ENCODE measurements at regions of chr13 and their contacts with region 1.

Region 1: GRCh38 chr13:23871616-23872220 is 17.5 kb downstream of the MIPEP start:
- DNase-seq: peak in 3 of 14 experiments; percentile 13 to 27 (median 18)
- ATAC-seq: no peak
- H3K4me3 ChIP-seq: no peak overlapping the region
- H3K4me3 Mint-ChIP-seq: no peak overlapping the region
- H3K27ac ChIP-seq: no peak overlapping the region
- H3K27ac Mint-ChIP-seq: no peak overlapping the region
- H3K4me1 ChIP-seq: no peaks in the 10 kb centered on the region
- H3K4me1 Mint-ChIP-seq: no peaks in the 10 kb centered on the region
- H3K27me3 ChIP-seq: no peaks in the 10 kb centered on the region
- H3K27me3 Mint-ChIP-seq: no peaks in the 10 kb centered on the region
- CTCF ChIP-seq: peak; percentile 80

Region 2: GRCh38 chr13:22091222-22091970 is 1780.3 kb before region 1 on chr13:
- CTCF ChIA-PET with region 1: no interaction called
- POLR2A ChIA-PET with region 1: no interaction called
- intact Hi-C with region 1: no loop called
- DNase-seq: no peak
- ATAC-seq: no peak
- H3K4me3 ChIP-seq: no peak overlapping the region
- H3K4me3 Mint-ChIP-seq: no peak overlapping the region
- H3K27ac ChIP-seq: no peak overlapping the region
- H3K27ac Mint-ChIP-seq: no peak overlapping the region
- H3K4me1 ChIP-seq: no peaks in the 10 kb centered on the region
- H3K4me1 Mint-ChIP-seq: no peaks in the 10 kb centered on the region
- H3K27me3 ChIP-seq: no peaks in the 10 kb centered on the region
- H3K27me3 Mint-ChIP-seq: peaks cover 4% of the 10 kb centered on the region
- CTCF ChIP-seq: no peak

Region 3: DNA sequence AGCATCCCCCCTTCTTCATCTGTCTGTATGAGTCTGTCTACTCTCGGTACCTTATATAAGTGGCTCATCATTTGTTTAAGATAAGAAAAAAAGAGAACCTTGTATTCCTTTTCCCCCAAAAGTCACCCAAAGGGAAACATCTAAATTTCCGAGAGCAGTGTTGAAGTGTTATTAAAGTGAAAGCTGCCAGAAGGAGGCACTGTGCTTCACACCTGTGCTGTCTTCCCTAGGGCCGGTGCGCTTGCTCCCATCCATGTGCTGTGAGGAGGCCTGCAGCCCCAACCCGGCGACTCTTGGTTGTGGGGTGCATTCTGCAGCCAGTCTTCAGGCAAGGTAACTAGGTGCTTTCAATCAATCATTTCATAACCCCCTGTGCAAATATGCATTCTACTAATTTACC is 204.0 kb before region 1 on chr13:
- CTCF ChIA-PET with region 1: no interaction called
- POLR2A ChIA-PET with region 1: no interaction called
- intact Hi-C with region 1: loop called in 1 of 2 experiments (anchors 5 kb)
- DNase-seq: peak in 2 of 14 experiments; percentile 8 to 17
- ATAC-seq: no peak
- H3K4me3 ChIP-seq: no peak overlapping the region
- H3K4me3 Mint-ChIP-seq: no peak overlapping the region
- H3K27ac ChIP-seq: no peak overlapping the region
- H3K27ac Mint-ChIP-seq: no peak overlapping the region
- H3K4me1 ChIP-seq: no peaks in the 10 kb centered on the region
- H3K4me1 Mint-ChIP-seq: no peaks in the 10 kb centered on the region
- H3K27me3 ChIP-seq: peaks cover 0 to 6% of the 10 kb centered on the region in 2 experiments
- H3K27me3 Mint-ChIP-seq: no peaks in the 10 kb centered on the region
- CTCF ChIP-seq: no peak

Measured in CD4-positive, alpha-beta T cell (primary cell).